Psoas muscle (tissue), 8 donors: ENCODE measurements at regions of chr11 and their contacts with region 1.

Region 1: GRCh38 chr11:9757809-9758636 is 94.1 kb downstream of the SWAP70 start:
- DNase-seq: peak; percentile 89 to 94
- ATAC-seq: peak; percentile 79 to 84 (median 83)
- H3K4me3 ChIP-seq: peak overlapping the region; percentile 71
- H3K27ac ChIP-seq: peak overlapping the region; percentile 90
- H3K4me1 ChIP-seq: peaks cover 21% of the 10 kb centered on the region
- H3K27me3 ChIP-seq: no peaks in the 10 kb centered on the region
- CTCF ChIP-seq: peak; percentile 91

Region 2: DNA sequence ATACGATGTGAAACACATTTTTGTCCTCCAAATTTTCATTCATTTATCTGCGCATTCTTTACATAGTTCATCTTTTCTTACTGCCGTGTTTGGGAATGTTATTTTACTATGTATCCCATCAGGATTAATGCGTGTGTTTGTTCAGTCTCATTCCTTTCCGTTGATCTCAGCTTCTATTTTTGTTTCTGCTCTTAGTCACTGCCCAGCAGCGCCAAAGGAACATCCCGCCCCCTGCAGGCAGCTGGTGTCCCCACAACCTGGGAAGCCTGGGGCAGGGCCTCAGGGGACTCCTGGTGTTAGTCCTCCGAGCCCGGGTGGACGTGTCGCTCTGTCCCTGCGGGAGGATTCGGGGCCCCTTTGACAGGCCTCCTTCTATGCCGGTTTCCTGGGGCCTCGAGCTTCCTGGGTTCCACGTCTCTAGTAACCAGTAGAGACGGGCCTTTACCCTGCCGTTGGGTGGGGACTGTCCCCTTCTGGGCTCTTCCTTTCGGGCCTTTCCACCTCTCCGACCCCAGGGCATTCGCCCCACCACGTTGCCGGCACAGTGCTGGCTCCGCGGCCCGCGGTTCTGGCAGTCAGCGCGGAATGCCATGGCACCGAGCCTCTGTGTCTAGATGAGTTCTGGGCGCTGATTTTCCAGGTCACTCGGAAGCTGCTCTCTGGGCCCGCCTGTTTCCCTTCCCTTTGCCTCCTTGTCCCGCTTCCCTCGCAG is 144.7 kb before region 1 on chr11:
- intact Hi-C with region 1: loop called in 1 of 2 experiments (anchors 5 kb)
- DNase-seq: peak; percentile 93 to 97
- ATAC-seq: peak; percentile 93 to 96 (median 96)
- H3K4me3 ChIP-seq: peak overlapping the region; percentile 62
- H3K27ac ChIP-seq: peak overlapping the region; percentile 94
- H3K4me1 ChIP-seq: peaks cover 5% of the 10 kb centered on the region
- H3K27me3 ChIP-seq: no peaks in the 10 kb centered on the region
- CTCF ChIP-seq: peak; percentile 87

Region 3: GRCh38 chr11:9861860-9862725 is 104.1 kb after region 1 on chr11:
- intact Hi-C with region 1: loop called in 1 of 2 experiments (anchors 5 kb)
- DNase-seq: peak; percentile 26 to 57
- ATAC-seq: peak; percentile 75 to 91 (median 80)
- H3K4me3 ChIP-seq: no peak overlapping the region
- H3K27ac ChIP-seq: no peak overlapping the region
- H3K4me1 ChIP-seq: no peaks in the 10 kb centered on the region
- H3K27me3 ChIP-seq: no peaks in the 10 kb centered on the region
- CTCF ChIP-seq: peak; percentile 63

Region 4: GRCh38 chr11:10307442-10308207 is 549.6 kb after region 1 on chr11:
- intact Hi-C with region 1: loop called in 1 of 2 experiments (anchors 5 kb)
- DNase-seq: peak; percentile 87 to 94
- ATAC-seq: peak; percentile 73 to 77 (median 74)
- H3K4me3 ChIP-seq: peak overlapping the region; percentile 84
- H3K27ac ChIP-seq: peak overlapping the region; percentile 86
- H3K4me1 ChIP-seq: peaks cover 35% of the 10 kb centered on the region
- H3K27me3 ChIP-seq: no peaks in the 10 kb centered on the region
- CTCF ChIP-seq: peak; percentile 99

Region 5: GRCh38 chr11:10328314-10329090 is 570.5 kb after region 1 on chr11:
- intact Hi-C with region 1: loop called (anchors 2 to 5 kb)
- DNase-seq: no peak
- ATAC-seq: peak; percentile 29 to 58 (median 56)
- H3K4me3 ChIP-seq: no peak overlapping the region
- H3K27ac ChIP-seq: no peak overlapping the region
- H3K4me1 ChIP-seq: peaks cover 21% of the 10 kb centered on the region
- H3K27me3 ChIP-seq: no peaks in the 10 kb centered on the region
- CTCF ChIP-seq: no peak